ENCODE measurements at regions of chr19 and their contacts with region 1.

Region 1: DNA sequence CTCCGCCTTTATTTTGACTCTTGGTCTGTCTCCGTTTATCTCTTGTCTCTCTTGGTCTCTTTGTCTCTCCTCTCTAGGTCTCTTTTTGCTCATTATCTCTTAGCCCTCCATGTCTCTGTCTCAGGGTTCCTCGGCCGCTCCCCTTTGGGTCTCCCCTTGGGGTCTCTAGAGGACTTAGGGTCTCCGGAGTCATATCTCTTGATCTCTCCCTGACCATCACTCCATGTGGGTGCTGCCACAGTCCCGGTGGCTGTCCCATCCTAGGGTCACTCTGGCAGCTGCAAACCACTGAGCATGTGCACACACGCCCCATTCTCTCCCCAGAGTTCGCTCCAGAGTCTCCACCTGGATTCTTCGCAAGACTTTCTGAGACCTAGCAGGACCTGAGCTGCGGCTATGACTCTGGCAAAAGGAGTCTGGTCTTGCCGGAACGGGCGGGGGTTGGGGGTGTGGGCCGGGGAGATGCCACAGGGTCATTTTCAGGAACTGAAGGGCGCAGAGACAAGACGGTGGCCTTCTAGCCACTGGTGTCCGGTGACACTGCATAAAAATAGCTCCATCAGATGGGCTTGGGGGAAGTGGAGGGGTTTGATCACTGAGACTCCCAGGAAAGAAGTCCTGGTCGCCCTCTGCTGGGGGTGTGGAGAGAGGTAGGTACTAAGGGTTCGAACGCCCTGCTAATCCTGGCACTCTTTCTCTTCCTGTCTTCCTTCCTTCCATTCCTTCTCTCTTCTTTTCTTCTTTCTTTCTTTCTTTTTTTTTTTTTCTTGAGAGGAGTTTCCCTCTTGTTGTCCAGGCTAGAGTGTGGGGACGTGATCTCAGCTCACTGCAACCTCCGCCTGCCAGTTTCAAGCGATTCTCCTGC is 1.2 kb upstream of the KCNA7 start:
- DNase-seq: peak; percentile 76 to 91 (median 82)
- ATAC-seq: peak; percentile 95
- H3K4me3 ChIP-seq: no peak overlapping the region
- H3K27ac ChIP-seq: peak overlapping the region; percentile 52; the same call in 2 of the 3 replicates
- H3K4me1 ChIP-seq: peaks cover 9 to 32% of the 10 kb centered on the region in 2 experiments; a peak in 4 of 5 replicates
- H3K27me3 ChIP-seq: peaks cover 3 to 21% of the 10 kb centered on the region in 2 experiments; a peak in 4 of 5 replicates
- CTCF ChIP-seq: peak; percentile 71 to 84 (median 79)
- EP300 ChIP-seq: no peak
- POLR2A ChIP-seq: 0 out of 2 replicates have a peak, but pooled peaks have one; percentile 35
- RAD21 ChIP-seq: peak; percentile 41 to 70

Region 2: DNA sequence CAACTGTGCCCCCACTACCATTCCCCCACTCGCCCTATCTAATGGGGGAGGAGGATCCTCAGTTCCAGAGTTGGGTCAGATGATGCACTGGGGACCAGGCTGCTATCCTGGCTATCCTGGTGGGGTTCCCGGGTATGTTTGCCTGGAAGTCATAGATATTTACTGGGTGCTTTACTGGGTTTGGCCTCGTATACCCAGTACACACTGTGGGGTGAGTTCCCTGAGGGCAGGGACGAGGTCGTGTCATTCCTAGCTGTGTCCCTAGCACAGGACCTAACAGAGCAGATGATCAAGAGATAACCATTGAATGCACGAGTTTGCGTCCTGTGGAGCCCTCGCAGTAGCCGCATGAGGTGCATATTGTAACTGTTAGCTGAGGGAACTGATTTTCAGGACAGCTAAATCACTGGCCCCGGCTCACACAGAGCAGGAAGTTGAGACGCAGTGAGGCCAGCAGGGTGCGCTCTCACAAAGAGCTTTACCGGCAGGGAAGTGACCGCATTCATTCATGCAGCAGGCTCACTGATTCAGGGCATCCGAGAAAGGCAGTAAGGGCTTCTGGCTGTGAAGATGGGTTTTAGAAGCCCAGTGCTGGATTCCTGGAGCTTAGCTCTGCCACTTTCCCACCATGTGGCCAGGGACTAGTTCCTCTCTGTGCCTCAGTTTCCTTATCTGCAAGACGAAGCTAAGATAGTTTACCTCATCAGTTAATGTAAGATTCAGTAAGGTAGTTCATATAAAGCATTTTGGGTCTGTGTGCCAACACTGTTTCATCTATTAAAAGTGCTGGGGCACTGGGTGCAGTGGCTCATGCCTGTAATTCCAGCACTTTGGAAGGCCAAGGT is 74.0 kb before region 1 on chr19:
- CTCF ChIA-PET with region 1: interaction called, 3 read pairs
- POLR2A ChIA-PET with region 1: interaction called, 3 read pairs
- in situ Hi-C with region 1: no loop called
- intact Hi-C with region 1: loop called (anchors 2 kb)
- DNase-seq: peak; percentile 40 to 74 (median 58)
- ATAC-seq: peak; percentile 87
- H3K4me3 ChIP-seq: no peak overlapping the region
- H3K27ac ChIP-seq: no peak overlapping the region
- H3K4me1 ChIP-seq: peaks cover 0 to 8% of the 10 kb centered on the region in 2 experiments; a peak in 4 of 5 replicates
- H3K27me3 ChIP-seq: no peaks in the 10 kb centered on the region
- CTCF ChIP-seq: peak; percentile 72 to 84 (median 73)
- EP300 ChIP-seq: no peak
- POLR2A ChIP-seq: no peak
- RAD21 ChIP-seq: peak in 1 of 2 experiments; percentile 61; a peak in 2 of 4 replicates

Region 3: GRCh38 chr19:49042177-49042576 is 31.6 kb before region 1 on chr19:
- CTCF ChIA-PET with region 1: no interaction called
- POLR2A ChIA-PET with region 1: no interaction called
- in situ Hi-C with region 1: no loop called
- intact Hi-C with region 1: no loop called
- DNase-seq: no peak
- ATAC-seq: no peak
- H3K4me3 ChIP-seq: no peak overlapping the region
- H3K27ac ChIP-seq: no peak overlapping the region
- H3K4me1 ChIP-seq: peaks cover 0 to 7% of the 10 kb centered on the region in 2 experiments; a peak in 2 of 5 replicates
- H3K27me3 ChIP-seq: no peaks in the 10 kb centered on the region; a peak in 1 of 5 replicates
- CTCF ChIP-seq: no peak
- EP300 ChIP-seq: no peak
- POLR2A ChIP-seq: no peak
- RAD21 ChIP-seq: no peak

Region 4: DNA sequence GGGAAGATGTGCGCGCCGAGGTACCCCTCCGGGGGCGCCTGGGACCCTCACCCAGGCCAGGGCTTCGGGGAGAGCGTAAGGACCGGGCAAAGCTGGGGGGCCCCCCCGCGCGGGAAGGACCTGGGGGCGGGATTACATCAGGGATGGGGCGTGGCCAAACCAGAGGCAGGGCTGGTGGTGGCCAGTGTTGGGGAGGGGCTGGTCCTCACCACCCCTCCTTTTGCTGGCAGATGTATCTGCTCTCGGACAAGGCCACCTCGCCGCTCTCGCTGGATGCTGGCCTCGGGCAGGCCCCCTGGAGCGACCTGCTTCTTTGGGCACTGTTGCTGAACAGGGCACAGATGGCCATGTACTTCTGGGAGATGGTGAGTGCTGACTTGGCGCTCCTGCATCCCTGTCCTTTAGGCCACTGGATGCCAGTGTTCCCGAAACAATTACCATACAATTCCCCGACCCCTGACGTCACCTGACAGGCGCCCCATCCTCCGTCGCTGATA is 109.2 kb after region 1 on chr19:
- CTCF ChIA-PET with region 1: no interaction called
- POLR2A ChIA-PET with region 1: no interaction called
- in situ Hi-C with region 1: no loop called
- intact Hi-C with region 1: no loop called
- DNase-seq: peak in 3 of 4 experiments; percentile 11 to 17 (median 12)
- ATAC-seq: peak; percentile 59; the same call in 2 of the 3 replicates
- H3K4me3 ChIP-seq: no peak overlapping the region
- H3K27ac ChIP-seq: no peak overlapping the region
- H3K4me1 ChIP-seq: no peaks in the 10 kb centered on the region; a peak in 1 of 5 replicates
- H3K27me3 ChIP-seq: no peaks in the 10 kb centered on the region
- CTCF ChIP-seq: no peak
- EP300 ChIP-seq: no peak
- POLR2A ChIP-seq: no peak
- RAD21 ChIP-seq: no peak